ENCODE measurements at regions of chr5 and their contacts with region 1.

Region 1: GRCh38 chr5:168317521-168318147 is 26.2 kb downstream of the WWC1 start:
- DNase-seq: peak; percentile 74 to 96
- H3K4me3 ChIP-seq: no peak overlapping the region
- H3K27ac ChIP-seq: peak overlapping the region; percentile 85
- H3K4me1 ChIP-seq: peaks cover 78% of the 10 kb centered on the region
- H3K27me3 ChIP-seq: no peaks in the 10 kb centered on the region
- CTCF ChIP-seq: no peak

Region 2: DNA sequence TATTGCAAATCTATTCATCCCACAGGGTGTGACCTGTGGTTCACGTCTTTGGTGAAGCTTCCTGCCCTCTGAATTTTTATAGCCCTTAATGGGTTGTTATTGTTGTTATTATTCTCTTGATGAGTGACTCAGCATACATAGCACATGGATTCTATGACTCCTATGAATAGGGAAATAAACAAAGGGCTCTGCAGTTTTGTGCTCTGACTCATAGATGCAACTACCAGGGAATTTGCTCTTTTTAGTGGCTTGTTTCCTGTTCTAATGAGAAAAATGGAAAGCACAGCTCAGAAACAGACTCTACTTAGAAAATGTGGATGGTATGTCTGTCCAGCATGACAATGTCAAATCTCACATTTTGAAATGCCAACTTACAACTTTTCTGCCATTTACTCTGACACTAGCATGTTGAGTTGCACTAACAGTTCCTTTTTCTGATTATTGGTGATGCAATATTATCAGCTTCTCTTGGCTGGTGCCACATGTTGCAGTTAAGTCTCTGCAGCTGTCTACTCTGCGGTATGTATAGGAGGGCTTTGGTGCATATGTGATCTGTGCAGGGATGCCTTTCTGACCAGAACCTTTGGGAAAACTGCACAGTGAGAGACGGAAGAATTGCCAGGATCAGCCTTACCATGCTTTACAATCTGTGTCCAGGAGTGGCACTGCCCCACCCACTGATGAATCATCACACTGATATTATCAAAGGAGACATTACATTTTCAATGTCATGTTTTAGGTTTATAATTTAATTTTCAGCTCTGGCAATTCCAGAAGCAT is 1022.5 kb before region 1 on chr5:
- CTCF ChIA-PET with region 1: no interaction called
- POLR2A ChIA-PET with region 1: no interaction called
- intact Hi-C with region 1: loop called (anchors 10 kb)
- DNase-seq: peak; percentile 64 to 93
- H3K4me3 ChIP-seq: peak overlapping the region; percentile 35; the same call in 1 of the 2 replicates
- H3K27ac ChIP-seq: peak overlapping the region; percentile 98
- H3K4me1 ChIP-seq: peaks cover 37% of the 10 kb centered on the region
- H3K27me3 ChIP-seq: no peaks in the 10 kb centered on the region
- CTCF ChIP-seq: no peak

Region 3: GRCh38 chr5:168260353-168261226 is 57.0 kb before region 1 on chr5:
- CTCF ChIA-PET with region 1: no interaction called
- POLR2A ChIA-PET with region 1: no interaction called
- intact Hi-C with region 1: no loop called
- DNase-seq: no peak
- H3K4me3 ChIP-seq: no peak overlapping the region
- H3K27ac ChIP-seq: no peak overlapping the region
- H3K4me1 ChIP-seq: no peaks in the 10 kb centered on the region
- H3K27me3 ChIP-seq: no peaks in the 10 kb centered on the region
- CTCF ChIP-seq: no peak

Region 4: GRCh38 chr5:168301593-168302388 is 15.8 kb before region 1 on chr5:
- CTCF ChIA-PET with region 1: interaction called, 3 read pairs
- POLR2A ChIA-PET with region 1: interaction called, 3 read pairs
- intact Hi-C with region 1: loop called (anchors 1 kb)
- DNase-seq: peak; percentile 84 to 97
- H3K4me3 ChIP-seq: no peak overlapping the region
- H3K27ac ChIP-seq: peak overlapping the region; percentile 63
- H3K4me1 ChIP-seq: peaks cover 61% of the 10 kb centered on the region
- H3K27me3 ChIP-seq: no peaks in the 10 kb centered on the region
- CTCF ChIP-seq: no peak

Region 5: DNA sequence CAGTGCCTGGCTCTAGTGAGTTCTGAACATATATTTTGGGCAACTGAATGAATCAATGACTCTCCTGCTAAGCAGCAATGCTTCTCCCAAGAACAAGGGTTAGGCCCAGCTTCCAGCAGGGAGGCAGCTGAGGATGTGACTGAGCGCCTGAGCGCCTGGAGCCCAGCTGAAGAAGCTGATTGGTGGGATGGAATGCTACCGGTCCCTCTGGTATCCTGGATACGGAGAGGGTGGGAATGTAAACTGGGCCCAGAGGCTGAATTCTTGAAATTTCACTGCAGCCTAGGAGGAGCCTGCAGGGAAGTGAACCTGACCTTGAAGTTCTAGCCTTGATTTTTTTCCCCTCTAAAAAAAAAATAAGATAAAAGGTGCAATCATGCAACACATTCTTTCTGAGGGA is 17.1 kb after region 1 on chr5:
- CTCF ChIA-PET with region 1: interaction called, 12 read pairs
- POLR2A ChIA-PET with region 1: interaction called, 18 read pairs
- intact Hi-C with region 1: loop called (anchors 1 kb)
- DNase-seq: peak; percentile 92 to 96
- H3K4me3 ChIP-seq: no peak overlapping the region
- H3K27ac ChIP-seq: peak overlapping the region; percentile 62
- H3K4me1 ChIP-seq: peaks cover 75% of the 10 kb centered on the region
- H3K27me3 ChIP-seq: no peaks in the 10 kb centered on the region
- CTCF ChIP-seq: no peak

Region 6: GRCh38 chr5:168359832-168360460 is 42.3 kb after region 1 on chr5:
- CTCF ChIA-PET with region 1: interaction called, 5 read pairs
- POLR2A ChIA-PET with region 1: interaction called, 4 read pairs
- intact Hi-C with region 1: loop called (anchors 1 kb)
- DNase-seq: peak; percentile 83 to 99
- H3K4me3 ChIP-seq: no peak overlapping the region
- H3K27ac ChIP-seq: peak overlapping the region; percentile 97
- H3K4me1 ChIP-seq: peaks cover 90% of the 10 kb centered on the region
- H3K27me3 ChIP-seq: no peaks in the 10 kb centered on the region
- CTCF ChIP-seq: no peak

Region 7: GRCh38 chr5:168401907-168402306 is 84.3 kb after region 1 on chr5:
- CTCF ChIA-PET with region 1: no interaction called
- POLR2A ChIA-PET with region 1: interaction called, 7 read pairs
- intact Hi-C with region 1: loop called (anchors 1 kb)
- DNase-seq: peak; percentile 79 to 97
- H3K4me3 ChIP-seq: no peak overlapping the region
- H3K27ac ChIP-seq: peak overlapping the region; percentile 90
- H3K4me1 ChIP-seq: peaks cover 44% of the 10 kb centered on the region
- H3K27me3 ChIP-seq: no peaks in the 10 kb centered on the region
- CTCF ChIP-seq: no peak

Region 8: GRCh38 chr5:170151097-170151831 is 1833.6 kb after region 1 on chr5:
- CTCF ChIA-PET with region 1: no interaction called
- POLR2A ChIA-PET with region 1: no interaction called
- intact Hi-C with region 1: loop called (anchors 10 kb)
- DNase-seq: peak; percentile 100
- H3K4me3 ChIP-seq: no peak overlapping the region; the same call in 1 of the 2 replicates
- H3K27ac ChIP-seq: peak overlapping the region; percentile 91
- H3K4me1 ChIP-seq: peaks cover 55% of the 10 kb centered on the region
- H3K27me3 ChIP-seq: no peaks in the 10 kb centered on the region
- CTCF ChIP-seq: no peak

Measured in PC-9 (cell line).